Sigmoid colon (tissue), 7 donors: ENCODE measurements at regions of chr13 and their contacts with region 1.

Region 1: GRCh38 chr13:50123862-50124536 is 108.8 kb downstream of the KCNRG start:
- DNase-seq: peak; percentile 92
- H3K4me3 ChIP-seq: peak overlapping the region; percentile 82 to 96 (median 90)
- H3K27ac ChIP-seq: peak overlapping the region; percentile 96 to 100 (median 99)
- H3K4me1 ChIP-seq: peaks cover 0 to 48% (median 31%) of the 10 kb centered on the region in 4 donors
- H3K27me3 ChIP-seq: peaks cover 11 to 25% (median 17%) of the 10 kb centered on the region in 3 donors
- CTCF ChIP-seq: no peak
- EP300 ChIP-seq: peak in 1 of 4 donors; percentile 15
- POLR2A ChIP-seq: peak; percentile 69 to 79

Region 2: GRCh38 chr13:49247643-49248621 is 876.1 kb before region 1 on chr13 and contains the start of gene CDADC1:
- intact Hi-C with region 1: loop called (anchors 10 kb)
- DNase-seq: peak; percentile 99
- H3K4me3 ChIP-seq: peak within 1 kb of the TSS; percentile 76 to 85 (median 81)
- H3K27ac ChIP-seq: peak within 1 kb of the TSS; percentile 88 to 93 (median 90)
- H3K4me1 ChIP-seq: peaks cover 2 to 41% (median 23%) of the 10 kb centered on the region in 4 donors
- H3K27me3 ChIP-seq: no peaks in the 10 kb centered on the region
- CTCF ChIP-seq: no peak
- EP300 ChIP-seq: peak in 2 of 4 donors; percentile 42 to 65
- POLR2A ChIP-seq: peak; percentile 88 to 89
- total RNA-seq, gene CDADC1: 6.5 to 12.2 (median 8.1) TPM

Region 3: DNA sequence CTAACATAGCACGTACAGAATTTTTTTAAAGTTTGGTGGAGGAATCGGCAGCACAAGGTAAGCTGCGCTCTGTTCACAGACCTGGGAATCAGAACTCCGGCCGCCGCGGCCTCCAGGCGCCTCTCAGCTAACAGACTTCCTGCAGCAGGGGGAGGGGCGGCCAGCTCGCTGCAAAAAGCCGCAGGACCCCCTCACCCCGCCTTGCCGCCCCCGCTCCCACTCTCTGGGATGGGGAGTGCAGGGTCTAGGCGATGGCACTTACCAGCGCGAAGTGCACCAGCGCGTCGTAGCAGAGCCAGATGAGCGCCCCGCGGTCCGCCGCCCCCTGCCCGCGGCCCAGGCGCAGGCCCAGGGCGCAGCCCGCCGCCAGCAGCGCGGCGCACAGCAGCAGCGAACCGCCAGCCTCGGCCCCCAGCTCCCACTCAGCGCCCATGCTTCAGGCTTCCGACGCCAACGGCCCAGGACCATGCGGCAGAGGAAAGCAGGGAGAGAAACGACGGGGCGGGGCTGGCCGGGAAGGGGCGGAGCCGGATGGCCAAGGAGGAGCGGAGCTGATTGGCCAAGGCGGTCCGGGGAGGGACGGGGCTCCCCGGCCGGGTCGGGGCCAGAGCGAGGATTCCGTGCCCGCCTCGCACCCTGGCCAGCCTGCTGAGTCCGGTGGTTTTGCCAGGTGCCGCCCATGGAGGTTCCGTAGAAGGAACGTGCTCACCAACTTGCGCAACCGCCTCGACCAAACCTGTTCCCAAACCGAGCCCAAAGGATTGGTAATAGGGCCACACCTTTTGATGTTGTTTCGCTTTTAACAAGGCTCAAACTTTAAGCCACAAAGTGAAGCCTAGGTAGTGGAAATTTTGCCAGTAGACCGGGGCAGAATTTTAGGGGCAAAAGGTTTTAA is 432.8 kb before region 1 on chr13 and contains the start of gene EBPL:
- intact Hi-C with region 1: loop called (anchors 5 kb)
- DNase-seq: peak; percentile 96
- H3K4me3 ChIP-seq: peak within 1 kb of the TSS; percentile 53 to 94 (median 69)
- H3K27ac ChIP-seq: peak within 1 kb of the TSS; percentile 72 to 88 (median 84)
- H3K4me1 ChIP-seq: peaks cover 0 to 26% (median 13%) of the 10 kb centered on the region in 4 donors
- H3K27me3 ChIP-seq: no peaks in the 10 kb centered on the region
- CTCF ChIP-seq: no peak
- EP300 ChIP-seq: no peak
- POLR2A ChIP-seq: peak; percentile 19 to 52
- total RNA-seq, gene EBPL: 31.0 to 75.9 (median 69.0) TPM

Region 4: DNA sequence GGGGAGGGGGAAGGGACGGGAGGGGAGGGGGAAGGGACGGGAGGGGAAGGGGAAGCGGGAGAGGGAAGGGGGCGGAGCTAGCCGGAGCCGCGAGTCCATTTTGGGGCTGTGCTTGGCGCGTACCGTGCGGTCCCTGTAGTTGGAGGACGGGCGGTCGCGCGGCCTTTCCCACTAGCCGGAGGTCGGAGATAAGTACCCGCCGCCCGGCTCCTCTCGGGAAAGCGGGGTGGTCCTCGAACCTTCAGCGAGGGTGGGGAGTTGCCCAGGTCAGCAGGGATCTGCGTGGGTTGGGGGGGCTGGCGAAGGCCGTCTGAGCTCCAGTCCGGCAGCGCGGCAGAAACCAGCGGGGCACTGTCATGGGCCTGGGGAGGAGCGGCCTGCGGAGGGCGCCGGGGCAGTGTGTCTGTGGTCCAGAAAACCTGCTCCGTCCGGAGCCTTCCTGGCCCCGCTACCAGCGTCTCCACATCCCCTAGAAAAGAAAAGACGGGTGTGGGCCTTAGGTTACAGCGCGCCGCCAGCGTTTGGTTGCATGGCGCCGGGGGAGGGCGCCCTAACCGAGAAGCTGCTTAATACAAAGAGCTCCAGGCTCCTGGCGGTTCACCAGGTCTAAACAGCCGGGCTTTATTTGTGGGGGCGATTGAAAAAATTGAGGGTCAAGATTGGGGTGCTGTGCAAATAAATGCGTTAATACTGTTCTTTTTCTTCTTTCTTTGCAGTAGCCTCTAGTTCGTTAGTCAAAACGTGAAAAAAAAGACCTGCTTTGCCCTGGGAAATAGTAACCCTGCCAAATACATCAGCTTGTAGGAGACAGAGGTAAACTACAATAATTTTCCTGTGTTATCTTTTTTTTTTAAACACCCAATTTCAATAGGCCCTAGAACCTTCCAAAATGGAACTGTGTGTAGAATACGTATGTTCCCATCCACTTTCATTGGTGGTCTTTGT is 126.8 kb before region 1 on chr13 and contains the start of gene TRIM13:
- intact Hi-C with region 1: loop called (anchors 1 kb)
- DNase-seq: peak; percentile 95
- H3K4me3 ChIP-seq: peak within 1 kb of the TSS; percentile 78 to 89 (median 86)
- H3K27ac ChIP-seq: peak within 1 kb of the TSS; percentile 99 to 100 (median 99)
- H3K4me1 ChIP-seq: peaks cover 0 to 51% (median 46%) of the 10 kb centered on the region in 4 donors
- H3K27me3 ChIP-seq: no peaks in the 10 kb centered on the region
- CTCF ChIP-seq: peak; percentile 34 to 76 (median 64)
- EP300 ChIP-seq: no peak
- POLR2A ChIP-seq: peak; percentile 47 to 58
- total RNA-seq, gene TRIM13: 17.1 to 25.0 (median 22.9) TPM

Region 5: GRCh38 chr13:50529154-50529882 is 405.3 kb after region 1 on chr13:
- intact Hi-C with region 1: loop called (anchors 5 kb)
- DNase-seq: peak; percentile 89
- H3K4me3 ChIP-seq: peak overlapping the region in 3 of 4 donors; percentile 2 to 20 (median 3)
- H3K27ac ChIP-seq: peak overlapping the region; percentile 48 to 62 (median 56)
- H3K4me1 ChIP-seq: peaks cover 0 to 43% (median 30%) of the 10 kb centered on the region in 4 donors
- H3K27me3 ChIP-seq: no peaks in the 10 kb centered on the region
- CTCF ChIP-seq: no peak
- EP300 ChIP-seq: no peak
- POLR2A ChIP-seq: no peak

Region 6: GRCh38 chr13:50731400-50731799 is 607.4 kb after region 1 on chr13:
- intact Hi-C with region 1: no loop called
- DNase-seq: no peak
- H3K4me3 ChIP-seq: no peak overlapping the region
- H3K27ac ChIP-seq: no peak overlapping the region
- H3K4me1 ChIP-seq: no peaks in the 10 kb centered on the region
- H3K27me3 ChIP-seq: no peaks in the 10 kb centered on the region
- CTCF ChIP-seq: no peak
- EP300 ChIP-seq: no peak
- POLR2A ChIP-seq: no peak

Region 7: GRCh38 chr13:51803422-51804294 is 1679.7 kb after region 1 on chr13 and contains the start of gene DHRS12:
- intact Hi-C with region 1: loop called (anchors 10 kb)
- DNase-seq: peak; percentile 97
- H3K4me3 ChIP-seq: peak within 1 kb of the TSS; percentile 52 to 83 (median 67)
- H3K27ac ChIP-seq: peak within 1 kb of the TSS; percentile 91 to 99 (median 97)
- H3K4me1 ChIP-seq: peaks cover 0 to 54% (median 45%) of the 10 kb centered on the region in 4 donors
- H3K27me3 ChIP-seq: no peaks in the 10 kb centered on the region
- CTCF ChIP-seq: no peak
- EP300 ChIP-seq: peak in 2 of 4 donors; percentile 31 to 45
- POLR2A ChIP-seq: peak; percentile 83 to 86
- total RNA-seq, gene DHRS12: 11.4 to 26.9 (median 14.9) TPM